K562 (cell line): ENCODE measurements at regions of chr18 and their contacts with region 1.

Region 1: DNA sequence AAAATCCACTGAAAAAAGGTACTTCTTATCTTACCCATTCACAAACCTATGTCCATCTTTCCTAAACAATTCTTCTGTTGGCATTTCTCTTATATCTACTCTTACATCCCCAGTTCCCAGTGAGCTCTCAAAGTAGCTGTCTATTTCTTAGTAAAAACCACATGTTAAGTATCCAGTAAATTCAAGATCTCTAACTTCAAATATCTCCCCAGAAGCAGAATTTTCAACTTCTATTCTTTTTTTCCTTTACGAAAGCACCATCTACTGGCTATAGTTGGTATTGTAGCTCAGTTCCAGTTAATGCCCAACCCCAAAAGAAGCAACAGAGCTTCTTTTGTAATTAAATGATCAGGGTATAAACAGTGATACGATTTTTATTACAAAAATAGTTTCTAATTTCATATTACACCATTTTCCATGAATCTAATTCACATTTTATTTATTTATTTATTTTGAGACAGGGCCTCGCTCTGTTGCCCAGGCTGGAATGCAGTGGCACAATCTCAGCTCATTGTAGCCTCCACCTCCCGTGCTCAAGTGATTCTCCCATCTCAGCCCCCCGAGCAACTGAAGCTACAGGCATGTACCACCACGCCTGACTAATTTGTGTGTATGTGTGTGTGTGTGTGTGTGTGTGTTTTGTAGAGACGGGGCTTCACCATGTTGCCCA is 28.5 kb downstream of the HRH4 start:
- DNase-seq: peak; percentile 60 to 62 (median 62)
- ATAC-seq: peak; percentile 61
- H3K4me3 ChIP-seq: no peak overlapping the region
- H3K27ac ChIP-seq: no peak overlapping the region
- H3K4me1 ChIP-seq: no peaks in the 10 kb centered on the region
- H3K27me3 ChIP-seq: peaks cover 0 to 15% of the 10 kb centered on the region in 2 experiments; a peak in 1 of 5 replicates
- CTCF ChIP-seq: peak; percentile 55 to 87 (median 63); a peak in 4 of 6 replicates
- EP300 ChIP-seq: no peak
- POLR2A ChIP-seq: no peak
- RAD21 ChIP-seq: peak; percentile 63 to 79

Region 2: DNA sequence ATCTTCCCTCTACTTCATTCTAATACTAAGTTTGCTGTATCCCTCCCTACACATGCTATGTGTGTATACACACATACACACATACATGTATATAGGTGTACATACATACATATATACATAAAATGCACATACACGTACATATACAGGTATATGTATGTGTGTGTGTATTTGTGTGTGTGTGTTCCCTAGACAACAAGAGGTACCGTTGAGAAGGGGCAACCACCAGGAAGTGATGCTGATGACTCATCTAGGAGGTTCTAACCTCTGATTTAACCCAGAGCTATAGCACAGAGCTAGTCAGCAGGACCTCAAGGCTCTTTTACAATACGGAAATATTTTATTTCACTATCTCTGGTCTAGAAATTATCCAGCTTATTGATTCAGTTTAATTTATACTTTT is 660.5 kb before region 1 on chr18:
- CTCF ChIA-PET with region 1: no interaction called
- POLR2A ChIA-PET with region 1: no interaction called
- in situ Hi-C with region 1: no loop called
- intact Hi-C with region 1: loop called (anchors 10 kb)
- DNase-seq: peak in 3 of 4 experiments; percentile 8 to 28 (median 23)
- ATAC-seq: no peak
- H3K4me3 ChIP-seq: no peak overlapping the region
- H3K27ac ChIP-seq: no peak overlapping the region
- H3K4me1 ChIP-seq: no peaks in the 10 kb centered on the region
- H3K27me3 ChIP-seq: peaks cover 0 to 4% of the 10 kb centered on the region in 2 experiments; a peak in 1 of 5 replicates
- CTCF ChIP-seq: no peak
- EP300 ChIP-seq: no peak
- POLR2A ChIP-seq: no peak
- RAD21 ChIP-seq: no peak

Region 3: DNA sequence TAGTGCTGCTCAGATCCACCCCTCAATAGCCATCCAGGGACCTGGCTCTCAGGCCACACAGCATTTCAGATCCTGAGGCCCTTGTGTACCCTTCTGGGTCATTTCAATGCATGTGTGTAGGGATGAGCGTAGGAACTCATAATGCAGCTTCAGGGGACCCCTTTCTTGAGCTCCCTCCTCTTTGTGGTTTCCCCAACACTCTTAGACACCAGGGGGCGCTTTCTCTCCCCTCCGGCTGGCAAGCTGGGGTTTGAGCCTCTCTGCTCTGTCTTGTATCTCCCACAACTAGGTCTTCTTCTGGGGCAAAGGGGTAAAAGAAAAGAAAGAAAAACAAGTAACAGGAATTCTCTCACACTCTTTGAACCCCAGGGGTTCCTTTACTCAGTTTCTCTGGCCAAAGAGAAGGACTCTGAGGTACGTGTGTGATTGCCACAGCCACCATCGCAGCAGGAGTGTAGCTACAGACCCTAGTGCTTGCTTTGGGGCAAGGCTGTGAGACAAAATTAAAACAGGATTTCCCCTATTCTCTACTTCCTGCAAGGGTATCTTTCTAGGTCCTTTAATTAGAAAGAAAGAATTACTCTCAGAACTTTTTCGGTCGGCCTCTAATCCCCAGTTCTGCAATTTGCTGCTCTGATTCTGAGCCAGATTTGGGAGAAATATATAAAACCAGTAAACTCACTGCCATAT is 312.1 kb before region 1 on chr18:
- CTCF ChIA-PET with region 1: interaction called, 6 read pairs
- POLR2A ChIA-PET with region 1: interaction called, 3 read pairs
- in situ Hi-C with region 1: loop called (anchors 10 kb)
- intact Hi-C with region 1: loop called (anchors 1 kb)
- DNase-seq: peak; percentile 42 to 64 (median 54)
- ATAC-seq: peak; percentile 93
- H3K4me3 ChIP-seq: no peak overlapping the region
- H3K27ac ChIP-seq: no peak overlapping the region
- H3K4me1 ChIP-seq: no peaks in the 10 kb centered on the region
- H3K27me3 ChIP-seq: peaks cover 3 to 13% of the 10 kb centered on the region in 2 experiments; a peak in 3 of 5 replicates
- CTCF ChIP-seq: peak; percentile 65 to 81 (median 69)
- EP300 ChIP-seq: no peak
- POLR2A ChIP-seq: no peak
- RAD21 ChIP-seq: peak in 1 of 2 experiments; percentile 46; a peak in 2 of 4 replicates

Region 4: DNA sequence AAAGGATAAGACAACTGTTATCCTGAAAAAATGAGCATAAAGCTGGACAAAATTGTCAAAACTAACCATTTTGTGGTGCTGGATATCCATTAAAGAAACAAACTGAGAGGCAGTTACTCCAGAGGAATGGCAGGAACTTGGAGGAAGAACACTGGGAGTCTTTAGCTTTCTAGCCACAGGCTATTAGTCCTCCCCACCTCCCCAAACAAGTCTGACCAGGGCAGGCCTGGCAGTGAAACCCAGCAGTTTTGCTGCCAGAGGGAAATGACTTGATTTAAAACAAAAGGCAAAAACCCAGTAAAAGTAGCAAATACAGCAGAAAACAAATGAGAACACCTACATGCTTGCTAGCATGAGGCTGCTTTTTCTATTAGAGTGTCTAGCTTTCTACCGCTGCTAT is 126.2 kb before region 1 on chr18:
- CTCF ChIA-PET with region 1: interaction called, 17 read pairs
- POLR2A ChIA-PET with region 1: interaction called, 3 read pairs
- in situ Hi-C with region 1: loop called (anchors 5 kb)
- intact Hi-C with region 1: loop called (anchors 1 kb)
- DNase-seq: no peak
- ATAC-seq: no peak
- H3K4me3 ChIP-seq: no peak overlapping the region
- H3K27ac ChIP-seq: no peak overlapping the region
- H3K4me1 ChIP-seq: no peaks in the 10 kb centered on the region
- H3K27me3 ChIP-seq: peaks cover 0 to 7% of the 10 kb centered on the region in 2 experiments; a peak in 1 of 5 replicates
- CTCF ChIP-seq: no peak
- EP300 ChIP-seq: no peak
- POLR2A ChIP-seq: no peak
- RAD21 ChIP-seq: no peak

Region 5: GRCh38 chr18:24426398-24427294 is 62.3 kb before region 1 on chr18 and contains the start of gene IMPACT:
- CTCF ChIA-PET with region 1: no interaction called
- POLR2A ChIA-PET with region 1: no interaction called
- in situ Hi-C with region 1: no loop called
- intact Hi-C with region 1: loop called (anchors 10 kb)
- DNase-seq: peak; percentile 88 to 93 (median 90)
- ATAC-seq: peak; percentile 96
- H3K4me3 ChIP-seq: peak within 1 kb of the TSS; percentile 57
- H3K27ac ChIP-seq: peak within 1 kb of the TSS; percentile 75
- H3K4me1 ChIP-seq: peaks cover 2 to 10% of the 10 kb centered on the region in 2 experiments; a peak in 2 of 5 replicates
- H3K27me3 ChIP-seq: peaks cover 0 to 3% of the 10 kb centered on the region in 2 experiments; a peak in 3 of 5 replicates
- CTCF ChIP-seq: no peak
- EP300 ChIP-seq: no peak
- POLR2A ChIP-seq: peak; percentile 72
- RAD21 ChIP-seq: no peak
- polyA plus RNA-seq, gene IMPACT: 5.7 to 6.7 TPM

Region 6: GRCh38 chr18:24530630-24531111 is 41.7 kb after region 1 on chr18:
- CTCF ChIA-PET with region 1: no interaction called
- POLR2A ChIA-PET with region 1: no interaction called
- in situ Hi-C with region 1: no loop called
- intact Hi-C with region 1: no loop called
- DNase-seq: peak in 1 of 4 experiments; percentile 14
- ATAC-seq: no peak
- H3K4me3 ChIP-seq: no peak overlapping the region
- H3K27ac ChIP-seq: no peak overlapping the region
- H3K4me1 ChIP-seq: no peaks in the 10 kb centered on the region
- H3K27me3 ChIP-seq: no peaks in the 10 kb centered on the region; a peak in 1 of 5 replicates
- CTCF ChIP-seq: no peak
- EP300 ChIP-seq: no peak
- POLR2A ChIP-seq: no peak
- RAD21 ChIP-seq: no peak

Region 7: DNA sequence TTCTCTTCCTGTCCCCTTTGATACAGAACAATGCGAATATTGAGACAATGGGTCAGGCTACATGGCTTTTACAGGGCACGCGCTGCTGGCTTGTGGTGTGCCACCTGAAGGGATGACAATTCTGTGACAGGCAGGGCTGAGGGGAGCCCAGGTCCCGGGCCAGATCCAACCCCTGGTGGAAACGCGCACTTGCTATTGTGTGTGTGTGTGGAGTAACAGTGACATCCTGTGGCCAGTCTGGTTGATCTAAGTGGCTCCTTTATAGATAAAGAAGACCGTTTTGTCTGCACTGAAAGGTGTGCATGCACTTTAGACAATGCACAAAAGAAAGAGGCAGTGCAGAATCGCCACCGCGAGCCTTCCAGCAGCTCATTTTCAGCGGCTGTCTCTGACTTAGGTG is 245.1 kb after region 1 on chr18:
- CTCF ChIA-PET with region 1: no interaction called
- POLR2A ChIA-PET with region 1: no interaction called
- in situ Hi-C with region 1: no loop called
- intact Hi-C with region 1: no loop called
- DNase-seq: peak in 1 of 4 experiments; percentile 15
- ATAC-seq: peak; percentile 67
- H3K4me3 ChIP-seq: no peak overlapping the region
- H3K27ac ChIP-seq: no peak overlapping the region
- H3K4me1 ChIP-seq: no peaks in the 10 kb centered on the region
- H3K27me3 ChIP-seq: no peaks in the 10 kb centered on the region
- CTCF ChIP-seq: peak in 2 of 3 experiments; percentile 35 to 40; a peak in 3 of 6 replicates
- EP300 ChIP-seq: no peak
- POLR2A ChIP-seq: no peak
- RAD21 ChIP-seq: peak in 1 of 2 experiments; percentile 36; a peak in 1 of 4 replicates